Mammary epithelial cell (primary cell): ENCODE measurements at regions of chr19 and their contacts with region 1.

Region 1: DNA sequence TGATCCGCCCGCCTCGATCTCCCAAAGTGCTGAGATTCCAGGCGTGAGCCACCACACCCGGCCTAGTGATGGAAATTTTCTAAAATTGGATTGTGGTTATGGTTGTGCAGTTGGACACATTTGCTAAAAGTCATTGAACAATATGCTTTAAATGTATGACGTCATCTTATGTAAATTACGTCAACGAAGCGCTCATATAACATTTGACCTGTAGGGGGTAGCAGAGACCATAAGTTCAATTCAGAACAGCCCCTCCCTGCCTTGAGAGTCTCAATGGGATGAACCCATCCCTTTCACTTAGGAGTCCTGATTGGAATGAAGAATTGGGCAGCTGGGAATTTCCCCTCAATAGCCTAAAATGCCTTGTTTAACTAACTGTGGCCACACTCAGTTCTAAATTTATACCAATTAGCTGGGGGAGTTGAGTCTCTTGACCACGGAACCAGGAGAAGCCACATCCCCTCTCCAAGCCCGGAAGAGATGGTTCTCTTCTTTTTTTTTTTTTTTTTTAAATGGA is 15.3 kb upstream of the TLE6 start:
- DNase-seq: peak; percentile 38
- H3K4me3 ChIP-seq: no peak overlapping the region
- H3K27ac ChIP-seq: no peak overlapping the region
- H3K4me1 ChIP-seq: no peaks in the 10 kb centered on the region
- H3K27me3 ChIP-seq: no peaks in the 10 kb centered on the region
- CTCF ChIP-seq: peak; percentile 45 to 66

Region 2: DNA sequence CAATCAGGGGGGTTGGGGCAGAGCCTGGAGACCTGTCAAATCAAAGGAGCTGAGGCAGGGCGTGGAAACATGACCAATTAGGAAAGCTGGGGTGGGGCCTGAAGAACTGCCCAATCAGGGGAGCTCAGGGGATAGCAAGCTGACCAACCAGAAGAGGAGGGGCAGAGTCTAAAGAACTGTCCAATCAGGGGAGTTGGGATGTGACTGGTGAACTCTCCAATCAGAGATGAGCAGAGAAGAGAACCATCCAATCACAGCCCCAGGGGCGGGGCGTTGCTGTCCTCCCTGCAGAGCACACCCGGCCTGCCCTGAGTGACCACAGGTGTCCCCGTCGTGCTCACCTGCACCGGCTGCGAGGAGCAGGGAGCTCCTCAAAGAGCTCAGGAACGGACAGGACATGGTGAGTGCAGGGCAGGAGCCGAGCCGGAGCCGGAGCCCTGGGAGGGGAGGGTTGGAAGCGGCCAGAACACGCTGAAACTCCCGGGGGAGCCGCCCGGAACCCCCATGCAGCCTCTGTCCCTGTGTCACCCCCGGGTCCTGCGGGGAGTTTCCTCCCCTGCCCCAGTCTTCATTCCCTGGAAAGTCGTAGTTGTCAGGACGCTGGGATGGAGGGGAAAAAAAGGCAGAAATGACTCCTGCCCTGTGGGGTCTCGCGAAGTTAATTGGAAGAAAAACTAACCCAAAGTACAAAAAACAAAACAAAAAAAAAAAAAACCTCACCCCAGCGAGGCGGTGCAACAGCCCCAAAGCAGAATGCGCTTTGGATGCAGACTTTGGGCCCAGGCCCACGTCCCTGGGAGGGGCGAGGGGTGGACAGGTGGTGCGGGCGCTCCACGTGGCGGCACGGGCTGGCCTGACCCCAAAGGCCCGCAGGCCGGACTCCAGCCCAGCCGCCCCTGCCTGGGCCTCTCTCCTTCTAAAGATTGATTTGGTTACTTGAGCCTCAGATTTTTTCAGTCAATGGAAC is 94.8 kb before region 1 on chr19 and contains the start of gene ZNF556:
- CTCF ChIA-PET with region 1: no interaction called
- dilution Hi-C with region 1: no loop called
- in situ Hi-C with region 1: no loop called
- intact Hi-C with region 1: no loop called
- DNase-seq: no peak
- H3K4me3 ChIP-seq: no peak within 1 kb of the TSS
- H3K27ac ChIP-seq: no peak within 1 kb of the TSS
- H3K4me1 ChIP-seq: no peaks in the 10 kb centered on the region
- H3K27me3 ChIP-seq: no peaks in the 10 kb centered on the region
- CTCF ChIP-seq: no peak
- total RNA-seq, gene ZNF556: 1.5 to 2.3 TPM

Region 3: DNA sequence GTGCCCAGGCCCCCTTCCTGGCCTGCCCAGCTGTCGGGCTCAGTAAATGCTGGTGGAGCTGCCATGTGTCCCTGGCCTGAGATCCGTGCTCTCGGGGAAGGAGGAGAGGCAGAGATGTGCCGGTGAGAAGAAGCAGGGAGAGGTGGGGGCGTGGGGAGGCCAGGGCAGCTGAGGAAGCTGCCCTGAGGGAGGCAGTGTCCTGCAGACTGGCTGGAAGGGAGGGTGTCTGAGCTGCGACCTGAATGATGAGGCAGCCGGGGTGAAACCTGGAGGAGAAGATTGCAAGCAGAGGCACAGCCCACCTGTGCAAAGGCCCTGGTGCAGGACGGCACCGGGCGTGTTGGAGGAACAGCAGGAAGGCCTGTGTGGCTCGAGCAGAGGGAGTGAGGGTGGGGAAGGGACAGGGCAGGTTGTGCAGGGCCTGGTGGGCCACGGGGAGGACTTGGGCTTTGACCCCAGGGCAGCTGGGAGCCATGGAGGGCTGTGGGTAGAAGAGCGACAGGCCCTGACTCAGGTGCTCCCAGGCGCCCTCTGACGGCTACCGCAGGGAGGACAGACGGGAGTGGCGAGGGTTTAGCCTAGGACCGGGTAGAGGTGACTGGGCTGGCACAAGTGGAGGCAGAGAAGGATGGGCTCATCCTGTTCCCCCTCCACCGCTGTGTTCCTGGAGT is 248.4 kb after region 1 on chr19:
- CTCF ChIA-PET with region 1: no interaction called
- dilution Hi-C with region 1: no loop called
- in situ Hi-C with region 1: no loop called
- intact Hi-C with region 1: loop called (anchors 1 kb)
- DNase-seq: peak; percentile 19
- H3K4me3 ChIP-seq: no peak overlapping the region
- H3K27ac ChIP-seq: no peak overlapping the region
- H3K4me1 ChIP-seq: no peaks in the 10 kb centered on the region
- H3K27me3 ChIP-seq: no peaks in the 10 kb centered on the region
- CTCF ChIP-seq: peak; percentile 49 to 75